ENCODE measurements at regions of chr13 and their contacts with region 1.

Region 1: DNA sequence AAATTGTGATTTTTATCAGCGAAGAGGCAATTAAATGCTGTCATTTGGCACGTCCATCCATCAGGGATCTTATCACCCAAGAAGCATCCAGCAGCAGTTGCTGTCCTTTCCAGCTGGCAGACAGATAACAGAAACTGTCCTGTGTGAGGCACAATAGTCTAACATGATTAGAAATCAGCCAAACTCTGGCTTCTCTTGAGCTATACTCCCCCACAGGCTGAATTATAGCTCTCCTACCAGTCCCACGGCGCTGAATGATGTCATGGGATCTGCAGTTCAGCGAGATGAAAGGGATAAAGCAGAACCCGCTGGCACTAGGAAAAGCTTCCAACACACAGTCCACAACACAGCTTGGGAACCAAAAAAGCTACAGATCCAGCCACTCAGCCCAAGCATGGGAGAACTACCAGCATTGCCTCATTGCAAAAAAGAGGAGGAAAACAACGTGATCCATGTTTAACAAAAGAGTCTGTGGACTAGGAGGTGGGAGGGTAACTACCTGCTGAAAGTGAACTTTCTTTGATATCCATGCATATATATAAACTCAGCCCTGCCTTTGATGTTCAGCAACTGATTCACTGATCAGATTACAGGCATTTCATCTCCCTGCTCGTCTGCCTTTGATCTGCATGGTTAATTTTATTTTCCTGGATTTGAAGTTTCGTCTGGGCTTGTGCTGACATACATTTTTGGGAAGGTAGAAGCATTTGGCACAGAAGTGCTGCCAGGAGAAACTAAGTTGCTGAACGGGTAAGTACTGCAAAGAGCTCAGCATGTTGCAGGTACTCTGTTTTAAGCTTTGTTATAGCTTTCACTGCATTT is at the start of gene TNFRSF19:
- DNase-seq: peak; percentile 40 to 76
- ATAC-seq: peak; percentile 72 to 94 (median 84)
- H3K4me3 ChIP-seq: peak within 1 kb of the TSS; percentile 5 to 65 (median 48)
- H3K27ac ChIP-seq: peak within 1 kb of the TSS; percentile 67 to 87 (median 78)
- H3K4me1 ChIP-seq: peaks cover 0 to 18% (median 5%) of the 10 kb centered on the region in 9 donors
- H3K27me3 ChIP-seq: peaks cover 0 to 36% (median 0%) of the 10 kb centered on the region in 7 donors
- CTCF ChIP-seq: no peak
- total RNA-seq, gene TNFRSF19: 25.5 to 49.6 (median 33.7) TPM

Region 2: DNA sequence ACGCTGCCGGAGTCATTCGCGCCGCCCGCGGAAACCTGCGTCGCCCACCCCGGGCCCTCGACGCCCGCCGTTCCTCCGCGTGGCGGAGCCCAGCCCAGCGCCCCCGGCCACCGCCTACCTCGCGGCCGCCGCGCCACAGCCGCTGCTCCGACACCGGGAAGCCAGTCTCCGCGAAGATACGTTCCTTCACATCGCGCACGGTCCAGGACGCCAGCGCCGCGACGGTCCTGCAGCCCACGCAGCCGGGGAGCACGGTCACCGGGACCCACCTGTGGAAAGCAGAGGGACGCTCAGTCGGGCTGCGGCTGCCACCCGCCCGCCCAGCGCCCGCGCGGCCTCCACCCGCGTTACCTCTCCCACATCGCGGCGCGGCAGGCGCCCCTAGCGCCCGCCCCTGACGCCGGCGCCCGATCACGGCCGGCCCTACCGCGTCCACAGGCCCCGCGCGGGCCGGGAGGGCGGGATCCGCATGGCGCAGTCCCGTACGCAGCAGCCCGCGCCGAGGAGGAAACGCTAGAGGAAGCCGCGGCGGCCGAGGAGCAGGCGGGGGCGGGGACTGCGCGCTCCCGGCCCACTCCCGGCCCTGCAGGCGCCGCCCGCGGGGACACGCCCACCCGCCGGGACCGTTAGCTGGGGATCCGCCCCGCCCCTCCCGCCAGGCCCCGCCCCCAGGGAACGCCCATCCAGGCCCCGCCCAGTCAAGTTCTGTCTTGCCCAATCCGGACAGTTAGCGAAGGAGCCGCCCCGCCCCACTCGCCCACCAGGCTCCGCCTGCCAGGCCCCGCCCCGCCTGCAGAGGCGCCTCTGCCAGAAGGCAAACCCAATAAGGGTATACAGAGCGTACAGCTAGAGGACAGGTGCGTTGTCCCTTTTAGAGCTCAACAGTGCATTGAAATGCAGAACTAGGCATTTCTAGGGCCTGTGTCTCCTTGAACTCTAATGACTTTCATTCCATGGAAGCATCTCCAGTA is 195.0 kb before region 1 on chr13:
- intact Hi-C with region 1: loop called in 2 of 10 experiments (anchors 10 kb)
- DNase-seq: peak; percentile 97 to 99
- ATAC-seq: peak; percentile 95 to 97 (median 96)
- H3K4me3 ChIP-seq: peak overlapping the region; percentile 69 to 90 (median 86)
- H3K27ac ChIP-seq: peak overlapping the region; percentile 60 to 95 (median 91)
- H3K4me1 ChIP-seq: peaks cover 7 to 73% (median 50%) of the 10 kb centered on the region in 9 donors
- H3K27me3 ChIP-seq: no peaks in the 10 kb centered on the region
- CTCF ChIP-seq: peak in 8 of 9 donors; percentile 11 to 49 (median 35)

Region 3: GRCh38 chr13:23510979-23511735 is 59.2 kb before region 1 on chr13:
- intact Hi-C with region 1: loop called in 7 of 10 experiments (anchors 2 to 10 kb)
- DNase-seq: peak in 1 of 2 donors; percentile 40
- ATAC-seq: peak in 3 of 8 donors; percentile 13 to 35 (median 33)
- H3K4me3 ChIP-seq: no peak overlapping the region
- H3K27ac ChIP-seq: peak overlapping the region in 6 of 10 donors; percentile 15 to 53 (median 40)
- H3K4me1 ChIP-seq: peaks cover 6 to 56% (median 20%) of the 10 kb centered on the region in 9 donors
- H3K27me3 ChIP-seq: no peaks in the 10 kb centered on the region
- CTCF ChIP-seq: peak in 7 of 9 donors; percentile 17 to 60 (median 48)

Region 4: DNA sequence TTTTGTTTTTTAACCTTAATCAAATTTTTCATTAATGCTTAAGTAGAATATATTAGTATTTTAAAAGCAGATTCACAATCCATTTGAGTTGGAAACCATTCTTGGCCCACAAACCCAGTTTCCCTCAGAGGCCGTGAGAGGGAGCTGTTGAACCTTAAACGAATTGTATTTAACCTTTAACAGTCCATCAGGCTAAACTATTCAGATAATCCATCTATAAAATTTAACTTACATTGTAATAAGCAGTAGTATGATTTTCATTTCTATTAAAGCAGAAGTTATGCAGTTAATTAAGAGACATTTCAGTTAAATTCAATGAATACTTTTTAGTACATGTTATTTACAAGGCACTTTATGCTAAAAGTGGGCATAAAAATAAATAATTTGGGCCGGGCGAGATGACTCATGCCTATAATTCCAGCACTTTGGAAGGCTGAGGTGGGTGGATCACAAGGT is 450.1 kb after region 1 on chr13:
- intact Hi-C with region 1: no loop called
- DNase-seq: peak in 1 of 2 donors; percentile 54
- ATAC-seq: peak in 6 of 8 donors; percentile 45 to 65 (median 60)
- H3K4me3 ChIP-seq: no peak overlapping the region
- H3K27ac ChIP-seq: no peak overlapping the region
- H3K4me1 ChIP-seq: peaks cover 0 to 16% (median 2%) of the 10 kb centered on the region in 9 donors
- H3K27me3 ChIP-seq: no peaks in the 10 kb centered on the region
- CTCF ChIP-seq: peak; percentile 51 to 89 (median 78)

Measured in heart right ventricle (tissue), 16 donors.